Heart right ventricle (tissue), 16 donors: ENCODE measurements at regions of chr2 and their contacts with region 1.

Region 1: GRCh38 chr2:240225660-240226475 is 85.4 kb upstream of the OTOS start:
- DNase-seq: peak in 1 of 2 donors; percentile 0
- ATAC-seq: no peak
- H3K4me3 ChIP-seq: no peak overlapping the region
- H3K27ac ChIP-seq: no peak overlapping the region
- H3K4me1 ChIP-seq: no peaks in the 10 kb centered on the region
- H3K27me3 ChIP-seq: peaks cover 0 to 29% (median 11%) of the 10 kb centered on the region in 7 donors
- CTCF ChIP-seq: no peak

Region 2: GRCh38 chr2:240339996-240340761 is 114.3 kb after region 1 on chr2:
- intact Hi-C with region 1: loop called in 3 of 10 experiments (anchors 5 to 10 kb)
- DNase-seq: no peak
- ATAC-seq: peak in 3 of 8 donors; percentile 28 to 56 (median 33)
- H3K4me3 ChIP-seq: no peak overlapping the region
- H3K27ac ChIP-seq: no peak overlapping the region
- H3K4me1 ChIP-seq: no peaks in the 10 kb centered on the region
- H3K27me3 ChIP-seq: peaks cover 0 to 5% (median 0%) of the 10 kb centered on the region in 7 donors
- CTCF ChIP-seq: no peak